Heart left ventricle (tissue), 16 donors: ENCODE measurements at regions of chr2 and their contacts with region 1.

Region 1: DNA sequence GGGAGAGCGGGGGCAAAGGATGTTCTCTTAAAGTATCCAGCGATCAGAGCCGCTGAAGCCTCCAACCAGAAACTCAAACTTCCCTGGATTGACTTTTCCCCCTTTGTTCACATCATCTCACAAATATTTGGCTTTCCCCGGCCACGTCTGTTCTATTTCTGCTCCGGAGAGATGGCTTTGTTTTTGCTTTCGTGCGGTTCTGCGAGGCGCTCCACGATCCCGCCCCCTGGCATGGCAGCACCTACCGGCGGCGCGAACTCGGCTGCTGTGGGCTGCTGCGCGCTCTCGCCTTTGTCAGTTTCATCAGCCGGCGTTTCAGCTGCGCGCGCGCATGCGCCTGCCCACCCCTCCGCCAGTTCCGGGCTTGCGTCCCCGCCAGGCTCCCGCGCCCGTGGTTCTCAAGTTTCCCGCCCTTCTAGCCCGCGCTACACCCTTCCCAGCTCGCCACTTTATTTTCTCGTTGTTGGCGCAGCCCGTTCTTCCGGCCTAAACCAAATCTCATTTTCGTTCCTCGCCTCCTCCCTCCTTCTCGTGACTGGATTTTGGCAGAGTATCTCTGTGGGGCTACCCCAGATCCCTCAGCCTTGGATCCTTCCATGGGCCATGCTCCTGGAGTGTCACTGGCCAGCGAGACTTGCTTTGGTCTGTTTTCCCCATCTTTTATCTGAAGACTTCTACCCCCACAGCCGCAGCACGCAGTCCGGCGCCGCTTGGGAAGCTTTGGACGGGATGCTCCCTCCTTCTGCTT is 98.0 kb downstream of the INSIG2 start:
- DNase-seq: peak; percentile 86 to 93 (median 88)
- ATAC-seq: peak; percentile 84 to 98 (median 96)
- H3K4me3 ChIP-seq: peak overlapping the region; percentile 35 to 82 (median 66)
- H3K27ac ChIP-seq: peak overlapping the region in 11 of 12 donors; percentile 35 to 87 (median 69)
- H3K4me1 ChIP-seq: peaks cover 0 to 18% (median 0%) of the 10 kb centered on the region in 12 donors
- H3K27me3 ChIP-seq: peaks cover 0 to 18% (median 0%) of the 10 kb centered on the region in 9 donors
- CTCF ChIP-seq: peak in 1 of 12 donors; percentile 20
- POLR2A ChIP-seq: peak in 1 of 2 donors; percentile 74

Region 2: DNA sequence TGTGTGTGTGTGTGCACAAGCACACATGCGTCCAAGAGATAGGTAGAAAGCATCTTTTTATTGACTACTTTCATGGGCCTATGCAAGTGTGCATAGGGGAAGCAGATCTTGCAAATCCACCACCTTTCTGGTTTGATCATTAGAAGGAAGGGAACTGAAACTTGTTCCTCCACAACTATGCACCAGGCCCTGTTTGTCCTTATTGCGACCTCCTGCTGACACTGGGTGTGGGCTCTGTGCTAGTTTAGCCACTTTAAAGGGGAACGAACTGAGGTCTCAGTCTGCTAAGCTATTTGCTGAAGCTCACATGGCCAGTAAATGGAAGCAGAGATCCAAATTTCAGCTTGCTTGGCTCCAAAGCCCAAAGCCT is 130.1 kb before region 1 on chr2:
- intact Hi-C with region 1: loop called in 1 of 10 experiments (anchors 10 kb)
- DNase-seq: peak in 1 of 5 donors; percentile 25
- ATAC-seq: peak in 3 of 4 donors; percentile 43 to 87 (median 53)
- H3K4me3 ChIP-seq: no peak overlapping the region
- H3K27ac ChIP-seq: peak overlapping the region in 1 of 12 donors; percentile 69
- H3K4me1 ChIP-seq: peaks cover 0 to 30% (median 0%) of the 10 kb centered on the region in 12 donors
- H3K27me3 ChIP-seq: peaks cover 0 to 24% (median 0%) of the 10 kb centered on the region in 9 donors
- CTCF ChIP-seq: no peak
- POLR2A ChIP-seq: no peak

Region 3: DNA sequence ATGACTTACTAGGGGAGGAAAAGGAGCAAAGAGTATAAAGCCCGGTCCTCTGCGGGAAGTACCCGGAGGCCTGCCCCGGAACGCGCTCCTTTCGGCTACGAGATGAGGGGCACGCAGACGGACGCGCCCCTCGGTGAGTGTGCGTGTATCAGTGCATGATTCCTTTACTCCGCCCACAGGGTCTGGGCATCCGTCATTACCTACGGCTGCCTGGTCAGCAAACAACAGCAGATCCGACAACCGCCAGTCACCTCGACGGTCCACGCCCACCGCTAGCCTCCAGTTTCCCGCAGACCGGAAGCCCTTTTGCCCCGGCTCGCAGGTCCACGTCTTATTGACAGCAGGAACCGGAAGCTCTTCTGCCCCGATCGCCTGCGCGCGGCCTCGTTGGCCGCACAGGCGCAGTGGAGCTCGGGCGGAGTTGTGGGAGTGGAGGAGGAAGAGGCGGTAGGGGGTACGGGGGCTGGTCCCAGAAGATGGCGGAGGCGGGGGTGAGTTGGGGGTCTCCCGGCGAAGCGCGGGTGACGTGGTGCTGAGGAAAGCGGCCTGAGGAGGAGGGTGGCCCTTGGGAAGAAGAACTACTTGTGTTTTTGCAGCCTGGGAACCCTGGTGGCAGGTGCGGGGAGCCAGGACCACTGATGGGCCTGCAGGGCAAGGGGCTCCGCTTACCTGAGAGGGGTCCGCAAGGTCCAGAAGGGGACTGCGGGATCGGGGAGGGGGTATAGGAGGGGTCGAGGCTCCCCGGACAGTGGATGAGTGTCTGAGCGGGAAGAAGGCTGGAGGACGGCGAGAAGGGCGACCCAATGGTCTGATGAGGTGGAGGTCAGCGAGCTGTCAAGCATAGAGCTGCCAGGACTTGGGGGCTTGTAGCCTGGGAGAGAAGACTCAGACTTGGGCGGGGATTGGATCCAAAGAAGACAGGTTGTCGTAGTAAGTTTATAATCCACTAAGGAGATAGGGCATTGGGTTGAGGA is 97.9 kb before region 1 on chr2 and contains the start of gene INSIG2:
- intact Hi-C with region 1: loop called in 3 of 10 experiments (anchors 5 to 10 kb)
- DNase-seq: peak; percentile 92 to 96 (median 95)
- ATAC-seq: peak; percentile 96 to 99 (median 99)
- H3K4me3 ChIP-seq: peak within 1 kb of the TSS; percentile 68 to 92 (median 83)
- H3K27ac ChIP-seq: peak within 1 kb of the TSS in 11 of 12 donors; percentile 23 to 81 (median 57)
- H3K4me1 ChIP-seq: peaks cover 0 to 31% (median 13%) of the 10 kb centered on the region in 12 donors
- H3K27me3 ChIP-seq: no peaks in the 10 kb centered on the region
- CTCF ChIP-seq: peak in 1 of 12 donors; percentile 20
- POLR2A ChIP-seq: peak in 1 of 2 donors; percentile 60
- total RNA-seq, gene INSIG2: 9.1 to 16.4 (median 13.7) TPM